ENCODE measurements at regions of chr5 and their contacts with region 1.

Region 1: GRCh38 chr5:147188200-147189108 is 46.4 kb upstream of the STK32A start:
- DNase-seq: peak; percentile 52
- ATAC-seq: peak; percentile 63
- H3K4me3 Mint-ChIP-seq: no peak overlapping the region
- H3K27ac Mint-ChIP-seq: no peak overlapping the region
- H3K4me1 Mint-ChIP-seq: peaks cover 2% of the 10 kb centered on the region
- H3K27me3 Mint-ChIP-seq: peaks cover 9% of the 10 kb centered on the region

Region 2: DNA sequence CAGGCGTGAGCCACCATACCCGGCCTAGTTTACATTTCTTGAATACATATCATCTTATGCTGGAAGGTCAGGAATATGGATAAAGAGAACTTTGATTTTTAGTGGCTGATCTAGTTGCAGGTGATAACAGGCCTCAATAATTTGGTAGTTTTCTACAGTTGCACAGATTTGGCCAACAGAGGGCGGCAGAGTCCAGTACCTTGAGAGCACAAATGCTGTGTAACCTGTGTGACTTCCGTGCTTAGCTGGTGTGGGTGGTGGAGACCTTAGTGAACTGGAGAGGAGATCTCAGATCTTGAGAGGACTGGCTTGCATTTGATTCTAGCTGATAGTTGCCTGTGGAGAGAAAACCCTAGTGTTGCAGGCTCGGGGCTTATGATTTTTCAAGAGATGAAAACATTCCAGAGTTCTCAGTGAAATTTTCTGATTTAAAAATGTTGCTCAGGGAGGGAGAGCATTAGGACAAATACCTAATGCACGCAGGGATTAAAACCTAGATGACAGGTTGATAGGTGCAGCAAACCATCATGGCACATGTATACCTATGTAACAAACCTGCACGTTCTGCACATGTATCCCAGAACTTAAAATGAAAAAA is 655.1 kb before region 1 on chr5:
- CTCF ChIA-PET with region 1: interaction called, 40 read pairs
- DNase-seq: peak; percentile 86
- ATAC-seq: peak; percentile 91
- H3K4me3 Mint-ChIP-seq: no peak overlapping the region
- H3K27ac Mint-ChIP-seq: no peak overlapping the region
- H3K4me1 Mint-ChIP-seq: peaks cover 14% of the 10 kb centered on the region
- H3K27me3 Mint-ChIP-seq: peaks cover 3% of the 10 kb centered on the region

Region 3: DNA sequence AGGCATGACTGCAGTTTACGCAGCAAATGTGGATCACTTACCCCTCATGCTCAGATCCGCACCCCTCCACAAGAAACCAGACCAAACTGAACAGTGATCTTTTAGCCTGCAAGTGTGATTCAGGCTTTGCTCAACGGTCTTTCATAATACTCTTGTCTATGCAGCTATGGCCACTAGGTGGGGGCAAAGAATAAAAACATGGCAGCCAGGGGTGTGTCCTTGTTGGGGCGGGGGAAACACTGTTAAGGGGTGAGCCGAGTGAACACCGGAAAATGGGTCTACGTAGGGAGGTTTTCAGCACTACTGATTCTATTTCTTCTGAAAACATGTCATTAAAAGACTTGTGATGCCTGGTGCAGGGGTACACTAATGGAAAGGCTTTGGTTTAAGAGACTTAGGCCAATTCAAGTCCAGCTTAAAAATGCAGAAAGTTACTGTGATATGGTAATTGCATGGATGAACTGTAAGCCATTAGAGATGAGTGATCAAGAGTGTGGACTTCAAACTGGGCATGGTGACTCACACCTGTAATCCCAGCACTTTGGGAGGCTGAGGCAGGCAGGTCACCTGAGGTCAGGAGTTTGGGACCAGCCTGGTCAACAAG is 622.6 kb before region 1 on chr5:
- CTCF ChIA-PET with region 1: interaction called, 12 read pairs
- DNase-seq: peak; percentile 73
- ATAC-seq: peak; percentile 99
- H3K4me3 Mint-ChIP-seq: no peak overlapping the region
- H3K27ac Mint-ChIP-seq: no peak overlapping the region
- H3K4me1 Mint-ChIP-seq: peaks cover 4% of the 10 kb centered on the region
- H3K27me3 Mint-ChIP-seq: peaks cover 3% of the 10 kb centered on the region

Region 4: DNA sequence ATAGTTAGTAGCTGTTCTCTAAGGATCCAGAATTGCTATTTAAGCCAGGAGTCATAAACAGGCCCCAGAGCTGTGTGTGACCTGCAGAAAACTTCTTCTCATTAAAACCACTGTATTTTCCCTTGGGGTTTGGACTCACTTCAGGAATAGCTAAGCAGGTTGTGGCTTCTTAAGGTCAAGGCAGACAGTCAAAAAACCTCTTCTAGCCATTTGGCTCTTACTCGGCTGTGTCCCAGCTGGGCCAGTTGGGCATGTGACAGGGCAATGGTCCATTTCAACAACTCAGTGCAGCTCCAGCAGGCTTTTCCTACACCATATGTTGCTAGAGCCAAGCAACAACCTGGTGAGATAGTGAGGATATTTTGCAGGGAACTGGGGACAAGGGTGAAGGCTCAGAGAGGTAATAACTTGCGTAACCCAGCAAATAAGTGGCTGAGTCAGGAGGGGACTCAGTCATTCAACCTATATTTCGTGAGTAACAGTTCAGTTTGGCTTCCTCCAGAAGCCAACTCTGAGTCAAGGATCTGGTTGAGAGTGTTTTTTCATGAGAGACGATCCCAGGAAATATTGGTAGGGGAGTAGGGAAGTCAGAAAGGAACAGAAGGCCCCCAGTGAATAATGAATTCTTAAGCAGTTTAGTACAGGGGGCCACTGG is 194.5 kb before region 1 on chr5:
- CTCF ChIA-PET with region 1: no interaction called
- DNase-seq: no peak
- ATAC-seq: no peak
- H3K4me3 Mint-ChIP-seq: no peak overlapping the region
- H3K27ac Mint-ChIP-seq: no peak overlapping the region
- H3K4me1 Mint-ChIP-seq: no peaks in the 10 kb centered on the region
- H3K27me3 Mint-ChIP-seq: peaks cover 2% of the 10 kb centered on the region

Region 5: GRCh38 chr5:147098233-147098790 is 90.1 kb before region 1 on chr5:
- CTCF ChIA-PET with region 1: interaction called, 15 read pairs
- DNase-seq: no peak
- ATAC-seq: no peak
- H3K4me3 Mint-ChIP-seq: no peak overlapping the region
- H3K27ac Mint-ChIP-seq: no peak overlapping the region
- H3K4me1 Mint-ChIP-seq: no peaks in the 10 kb centered on the region
- H3K27me3 Mint-ChIP-seq: peaks cover under 1% of the 10 kb centered on the region

Region 6: DNA sequence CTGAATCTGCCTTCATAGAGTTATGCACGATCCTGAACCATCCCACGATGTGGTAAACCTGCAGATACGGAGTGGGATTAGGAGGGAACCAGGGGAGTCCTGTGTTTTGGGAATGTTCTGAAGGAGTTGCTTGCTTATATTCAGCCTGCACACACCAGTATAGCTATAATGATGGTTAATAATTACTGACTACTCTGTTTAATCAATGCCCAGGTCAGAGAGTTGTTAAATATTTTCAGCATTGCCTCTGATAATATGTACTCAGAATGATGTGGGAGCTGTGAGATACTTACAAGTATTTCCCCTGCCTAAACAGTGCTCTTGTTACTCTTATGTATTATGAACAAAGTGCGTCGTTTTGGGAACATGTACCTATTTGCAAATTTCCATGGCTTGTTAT is 11.5 kb after region 1 on chr5:
- CTCF ChIA-PET with region 1: interaction called, 10 read pairs
- DNase-seq: no peak
- ATAC-seq: no peak
- H3K4me3 Mint-ChIP-seq: no peak overlapping the region
- H3K27ac Mint-ChIP-seq: no peak overlapping the region
- H3K4me1 Mint-ChIP-seq: no peaks in the 10 kb centered on the region
- H3K27me3 Mint-ChIP-seq: peaks cover 11% of the 10 kb centered on the region

Region 7: DNA sequence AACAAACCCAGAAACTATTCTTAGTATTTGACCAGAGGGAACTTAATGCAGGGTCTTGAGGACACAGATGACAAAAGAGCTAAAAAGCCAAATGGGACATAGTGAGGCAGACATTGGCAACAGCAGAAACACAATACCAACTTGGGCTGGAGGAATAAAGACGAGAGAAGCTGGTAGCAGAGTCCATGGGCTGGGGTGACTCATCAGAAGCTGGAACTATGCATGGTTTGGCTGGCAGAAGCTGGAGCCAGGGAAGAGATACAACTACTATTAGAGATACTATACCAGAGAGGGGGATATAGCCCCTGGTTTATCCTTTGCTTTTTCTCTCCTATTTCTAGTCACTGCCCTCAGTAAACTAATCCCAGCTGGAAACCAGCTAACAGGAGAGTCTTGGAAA is 350.6 kb after region 1 on chr5:
- CTCF ChIA-PET with region 1: no interaction called
- DNase-seq: no peak
- ATAC-seq: no peak
- H3K4me3 Mint-ChIP-seq: no peak overlapping the region
- H3K27ac Mint-ChIP-seq: no peak overlapping the region
- H3K4me1 Mint-ChIP-seq: no peaks in the 10 kb centered on the region
- H3K27me3 Mint-ChIP-seq: no peaks in the 10 kb centered on the region